ENCODE measurements at regions of chr16 and their contacts with region 1.

Region 1: DNA sequence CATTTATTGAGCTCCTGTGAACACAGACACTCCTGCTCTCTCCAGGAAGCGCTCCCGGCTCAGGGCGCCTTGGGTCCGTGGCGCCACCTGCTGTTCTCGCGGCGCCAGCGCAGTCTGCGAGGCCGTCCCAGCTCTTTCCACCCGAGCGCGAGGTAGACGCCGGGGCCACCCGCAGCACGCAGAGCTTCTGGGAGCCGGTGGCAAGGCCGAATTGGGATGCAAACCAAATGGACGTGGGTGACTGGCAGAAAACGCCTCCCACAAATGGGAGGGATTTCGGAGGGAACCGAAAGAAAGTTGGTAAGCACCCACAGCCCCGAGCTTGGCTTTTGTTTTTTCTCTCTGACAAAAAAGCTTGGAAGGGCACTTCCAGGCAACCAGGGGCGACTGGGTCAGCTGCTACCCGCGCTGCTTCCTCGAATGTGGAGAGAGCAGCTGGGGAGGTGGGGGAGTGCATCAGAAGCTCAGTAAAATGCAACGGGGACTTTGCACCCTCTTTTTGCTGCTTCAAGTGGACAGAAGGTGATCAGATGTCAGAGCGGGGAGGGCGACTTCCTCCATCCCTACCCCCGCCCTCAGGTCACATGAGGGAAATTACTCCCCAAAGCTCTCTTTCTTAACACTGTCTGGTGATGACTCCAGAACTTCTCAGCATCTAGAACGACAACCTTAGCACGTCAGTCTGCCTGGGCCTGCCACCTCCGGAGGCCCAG is 13.5 kb upstream of the N4BP1 start:
- DNase-seq: peak; percentile 86
- ATAC-seq: peak; percentile 96 to 97

Region 2: GRCh38 chr16:48231727-48232492 is 391.6 kb before region 1 on chr16:
- intact Hi-C with region 1: loop called in 1 of 2 experiments (anchors 5 kb)
- DNase-seq: no peak
- ATAC-seq: peak; percentile 35 to 47

Region 3: DNA sequence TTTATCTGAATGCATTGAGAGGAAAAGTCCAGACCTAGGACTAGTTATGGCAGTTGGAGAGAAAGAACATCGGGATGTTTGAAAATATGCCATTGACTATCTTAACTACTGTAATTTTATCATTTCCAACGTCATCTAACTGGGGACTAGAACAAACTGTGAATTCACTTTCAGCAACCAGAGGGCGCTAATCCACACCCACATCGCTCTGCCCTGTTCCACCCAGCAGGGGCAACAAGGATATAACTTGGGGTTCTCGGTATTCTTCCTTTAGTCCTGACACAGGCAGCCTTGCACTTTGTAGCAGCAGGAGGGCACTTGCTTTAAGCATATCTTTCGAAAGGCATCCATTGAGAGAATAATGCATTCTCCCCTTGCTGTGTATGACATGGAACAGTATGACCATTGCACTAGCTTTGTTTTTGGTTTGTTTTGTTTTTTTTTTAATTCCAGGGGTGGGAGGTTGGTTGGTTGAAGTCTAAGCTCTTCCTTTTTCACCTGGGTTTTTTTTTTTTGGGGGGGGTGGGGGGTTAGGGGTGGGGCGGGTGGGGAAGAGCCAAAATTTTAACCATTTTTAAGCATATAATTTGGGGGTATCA is 269.8 kb before region 1 on chr16:
- intact Hi-C with region 1: loop called (anchors 2 to 10 kb)
- DNase-seq: peak; percentile 58
- ATAC-seq: peak; percentile 85 to 88

Region 4: DNA sequence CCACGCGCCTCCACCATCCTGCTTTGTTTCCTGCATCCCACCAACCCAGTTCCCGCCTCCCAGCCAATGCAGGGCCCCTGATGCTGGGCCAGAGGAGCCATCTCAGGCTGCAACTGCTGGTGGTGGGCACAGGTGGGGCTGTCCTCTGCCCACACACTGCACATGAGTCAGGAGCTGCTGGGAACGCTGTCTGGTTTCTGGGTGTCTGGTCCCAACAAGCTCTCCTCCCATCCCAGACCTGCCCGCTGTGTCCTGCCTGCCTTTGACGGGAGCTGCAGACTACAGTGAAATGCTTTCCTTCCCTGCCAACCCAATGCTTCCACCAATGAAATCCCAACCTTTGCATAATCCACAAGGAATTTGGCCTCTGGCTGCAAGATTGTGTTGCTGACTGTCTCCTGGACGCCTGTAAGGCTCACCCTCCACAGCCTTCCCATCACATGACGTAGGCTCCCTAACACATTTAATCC is 112.4 kb before region 1 on chr16:
- intact Hi-C with region 1: no loop called
- DNase-seq: no peak
- ATAC-seq: peak; percentile 65 to 80

Region 5: GRCh38 chr16:48535831-48536613 is 87.4 kb before region 1 on chr16:
- intact Hi-C with region 1: loop called (anchors 5 to 10 kb)
- DNase-seq: peak; percentile 51
- ATAC-seq: peak; percentile 74 to 82

Region 6: GRCh38 chr16:48542020-48542473 is 81.4 kb before region 1 on chr16:
- intact Hi-C with region 1: loop called (anchors 5 to 10 kb)
- DNase-seq: peak; percentile 53
- ATAC-seq: peak; percentile 70 to 72

Region 7: GRCh38 chr16:48734220-48734859 is 110.9 kb after region 1 on chr16:
- intact Hi-C with region 1: no loop called
- DNase-seq: no peak
- ATAC-seq: no peak